Heart right ventricle (tissue), 16 donors: ENCODE measurements at regions of chr7 and their contacts with region 1.

Region 1: DNA sequence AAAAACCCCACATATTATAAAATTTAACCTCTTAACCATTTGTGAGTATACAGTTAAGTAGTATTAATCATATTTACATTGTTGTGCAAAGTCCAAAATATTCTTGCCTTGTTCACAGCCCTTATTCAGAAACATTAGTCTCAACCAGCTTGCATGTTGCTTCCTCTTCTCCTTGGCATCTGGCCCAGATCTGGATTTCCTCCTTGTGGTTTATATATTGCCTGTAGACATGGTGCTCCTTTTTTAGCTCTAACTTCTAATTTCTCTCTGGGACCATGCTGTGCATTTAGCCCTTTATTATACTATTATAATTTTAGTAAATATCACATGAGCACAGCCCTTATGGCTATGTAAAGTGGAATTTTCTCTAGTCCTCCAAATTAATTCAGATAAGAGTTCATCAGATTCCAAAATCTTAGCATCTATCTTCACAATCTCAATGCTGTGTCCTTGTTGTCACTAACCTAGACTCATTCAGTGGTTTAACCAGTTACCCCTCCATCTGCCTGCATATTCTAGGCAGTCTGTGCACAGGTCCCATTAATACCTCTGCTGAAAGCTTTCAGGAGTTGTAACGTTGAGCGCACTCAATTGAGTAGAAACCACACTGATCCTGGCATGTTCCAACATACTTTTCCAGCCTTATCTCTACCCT is 7.9 kb downstream of the CPED1 start:
- DNase-seq: peak in 1 of 2 donors; percentile 92
- ATAC-seq: peak; percentile 49 to 78 (median 62)
- H3K4me3 ChIP-seq: no peak overlapping the region
- H3K27ac ChIP-seq: peak overlapping the region in 8 of 10 donors; percentile 3 to 70 (median 40)
- H3K4me1 ChIP-seq: peaks cover under 1 to 99% (median 88%) of the 10 kb centered on the region in 9 donors
- H3K27me3 ChIP-seq: peaks cover 0 to 3% (median 0%) of the 10 kb centered on the region in 7 donors
- CTCF ChIP-seq: no peak

Region 2: DNA sequence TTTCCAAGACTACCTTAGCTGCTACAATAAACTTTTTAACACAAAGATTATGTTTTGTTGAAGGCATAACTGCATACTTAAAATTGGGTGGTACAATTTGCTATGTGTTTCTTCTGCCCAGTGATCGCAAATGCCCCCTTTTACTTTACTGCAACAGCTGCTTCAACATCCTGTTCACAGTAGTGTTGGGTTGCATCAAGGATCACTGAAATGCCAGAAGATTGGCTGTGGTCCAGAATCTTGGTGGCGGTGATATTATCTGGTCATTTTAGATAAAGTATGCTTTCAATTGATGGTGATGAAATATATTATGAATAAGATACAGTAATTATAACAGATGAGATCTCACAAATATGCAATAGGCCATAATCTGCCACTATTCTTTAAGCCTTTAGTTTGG is 75.9 kb before region 1 on chr7:
- intact Hi-C with region 1: no loop called
- DNase-seq: no peak
- ATAC-seq: no peak
- H3K4me3 ChIP-seq: no peak overlapping the region
- H3K27ac ChIP-seq: no peak overlapping the region
- H3K4me1 ChIP-seq: no peaks in the 10 kb centered on the region
- H3K27me3 ChIP-seq: no peaks in the 10 kb centered on the region
- CTCF ChIP-seq: no peak

Region 3: DNA sequence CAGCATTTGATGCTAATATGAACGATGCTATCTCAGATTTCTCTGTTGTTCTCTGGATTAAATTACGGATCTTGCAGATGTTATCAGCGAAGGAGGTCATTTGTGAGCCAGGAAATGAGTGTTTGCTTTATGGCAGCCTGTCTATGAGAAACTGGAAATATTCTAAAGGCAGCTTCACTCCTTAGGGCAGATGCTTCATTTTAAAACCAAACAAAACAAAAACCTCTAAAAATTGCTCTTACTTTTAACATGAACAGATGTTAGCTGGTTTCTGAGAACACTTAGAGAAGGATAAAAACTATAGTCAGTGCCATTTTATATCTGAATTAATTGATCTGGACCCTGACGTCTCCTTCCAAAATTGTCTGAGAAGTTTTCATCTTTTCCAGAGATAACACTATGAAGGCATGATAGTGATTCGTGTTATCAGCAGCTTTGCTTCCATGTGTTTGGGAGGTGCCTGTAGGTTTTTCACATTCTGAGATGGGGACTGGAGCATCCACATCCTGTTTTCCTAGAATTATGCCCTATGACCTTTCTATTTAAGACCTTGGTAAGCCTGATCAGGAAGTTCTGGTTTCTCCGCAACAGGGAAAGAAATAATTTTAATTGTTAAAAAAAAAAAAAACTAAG is 45.2 kb after region 1 on chr7:
- intact Hi-C with region 1: loop called in 1 of 10 experiments (anchors 10 kb)
- DNase-seq: no peak
- ATAC-seq: peak in 6 of 8 donors; percentile 36 to 86 (median 58)
- H3K4me3 ChIP-seq: peak overlapping the region in 1 of 10 donors; percentile 0
- H3K27ac ChIP-seq: peak overlapping the region in 9 of 10 donors; percentile 33 to 85 (median 67)
- H3K4me1 ChIP-seq: peaks cover 0 to 66% (median 47%) of the 10 kb centered on the region in 9 donors
- H3K27me3 ChIP-seq: no peaks in the 10 kb centered on the region
- CTCF ChIP-seq: no peak